Gastrocnemius medialis (tissue), 4 donors: ENCODE measurements at regions of chr2 and their contacts with region 1.

Region 1: GRCh38 chr2:102240640-102241370 is 54.0 kb downstream of the IL1RL2 start:
- DNase-seq: peak; percentile 86 to 87
- ATAC-seq: peak; percentile 96 to 98
- H3K4me3 ChIP-seq: peak overlapping the region in 1 of 4 donors; percentile 28
- H3K27ac ChIP-seq: peak overlapping the region; percentile 61 to 79 (median 70)
- H3K4me1 ChIP-seq: peaks cover 0 to 13% of the 10 kb centered on the region in 2 donors
- H3K27me3 ChIP-seq: no peaks in the 10 kb centered on the region
- CTCF ChIP-seq: peak; percentile 95 to 99 (median 97)
- POLR2A ChIP-seq: peak in 1 of 2 donors; percentile 25

Region 2: DNA sequence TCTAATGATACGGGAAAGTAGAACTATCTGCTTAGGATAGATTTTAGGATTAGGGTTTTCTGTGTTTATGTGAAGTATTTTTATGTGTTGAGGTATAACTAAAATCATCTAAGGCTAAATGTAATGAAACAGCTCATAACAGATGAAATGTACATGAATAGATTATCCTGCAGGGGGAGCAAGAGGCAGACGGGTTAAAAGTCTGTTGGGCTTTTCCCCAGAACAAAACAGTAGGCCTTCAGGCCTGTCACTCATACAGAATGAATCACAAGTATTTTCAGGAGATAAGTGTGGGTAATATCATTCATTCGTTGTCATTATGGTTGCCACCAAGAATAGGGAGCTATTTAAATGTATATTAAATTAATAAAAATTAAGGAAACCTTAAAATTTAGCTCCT is 356.9 kb before region 1 on chr2:
- in situ Hi-C with region 1: no loop called
- intact Hi-C with region 1: loop called (anchors 5 kb)
- DNase-seq: no peak
- ATAC-seq: peak; percentile 53 to 81
- H3K4me3 ChIP-seq: no peak overlapping the region
- H3K27ac ChIP-seq: no peak overlapping the region
- H3K4me1 ChIP-seq: peaks cover 0 to 16% of the 10 kb centered on the region in 2 donors
- H3K27me3 ChIP-seq: no peaks in the 10 kb centered on the region
- CTCF ChIP-seq: peak; percentile 33 to 47 (median 41)
- POLR2A ChIP-seq: no peak

Region 3: DNA sequence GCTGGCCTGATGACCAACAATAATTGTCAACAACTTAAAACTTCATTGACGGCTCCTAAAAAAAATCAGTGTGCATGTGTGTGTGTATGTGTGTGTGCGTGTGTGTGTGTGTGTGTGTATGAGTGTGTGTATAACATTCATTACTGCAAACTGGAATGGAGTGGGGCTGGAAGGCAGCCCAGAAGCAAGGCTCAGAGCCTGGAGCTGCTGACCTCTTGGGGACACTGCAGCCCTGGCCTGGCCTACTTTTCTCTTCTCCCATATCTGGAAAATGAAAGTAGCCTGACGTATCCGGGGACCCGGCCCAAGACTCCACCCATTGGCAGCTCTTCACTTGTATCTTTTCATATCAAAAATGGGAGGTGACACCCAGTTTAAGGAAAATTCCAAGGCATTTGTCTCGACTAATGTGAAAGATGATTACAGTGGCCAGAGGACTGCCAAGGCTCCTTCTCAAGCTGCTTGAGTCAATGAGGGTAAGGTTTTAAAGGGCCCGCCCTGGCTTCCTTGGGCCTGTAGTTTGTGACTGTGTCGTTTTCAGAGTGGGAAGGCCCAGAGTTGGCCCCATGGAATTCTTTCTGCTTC is 170.7 kb before region 1 on chr2:
- in situ Hi-C with region 1: no loop called
- intact Hi-C with region 1: loop called (anchors 2 kb)
- DNase-seq: peak; percentile 88 to 97
- ATAC-seq: peak; percentile 78 to 87
- H3K4me3 ChIP-seq: peak overlapping the region; percentile 46 to 55 (median 52)
- H3K27ac ChIP-seq: peak overlapping the region; percentile 87 to 95 (median 92)
- H3K4me1 ChIP-seq: peaks cover 44 to 49% of the 10 kb centered on the region in 2 donors
- H3K27me3 ChIP-seq: no peaks in the 10 kb centered on the region
- CTCF ChIP-seq: peak in 2 of 5 experiments; percentile 13 to 28
- POLR2A ChIP-seq: peak in 1 of 2 donors; percentile 44

Region 4: DNA sequence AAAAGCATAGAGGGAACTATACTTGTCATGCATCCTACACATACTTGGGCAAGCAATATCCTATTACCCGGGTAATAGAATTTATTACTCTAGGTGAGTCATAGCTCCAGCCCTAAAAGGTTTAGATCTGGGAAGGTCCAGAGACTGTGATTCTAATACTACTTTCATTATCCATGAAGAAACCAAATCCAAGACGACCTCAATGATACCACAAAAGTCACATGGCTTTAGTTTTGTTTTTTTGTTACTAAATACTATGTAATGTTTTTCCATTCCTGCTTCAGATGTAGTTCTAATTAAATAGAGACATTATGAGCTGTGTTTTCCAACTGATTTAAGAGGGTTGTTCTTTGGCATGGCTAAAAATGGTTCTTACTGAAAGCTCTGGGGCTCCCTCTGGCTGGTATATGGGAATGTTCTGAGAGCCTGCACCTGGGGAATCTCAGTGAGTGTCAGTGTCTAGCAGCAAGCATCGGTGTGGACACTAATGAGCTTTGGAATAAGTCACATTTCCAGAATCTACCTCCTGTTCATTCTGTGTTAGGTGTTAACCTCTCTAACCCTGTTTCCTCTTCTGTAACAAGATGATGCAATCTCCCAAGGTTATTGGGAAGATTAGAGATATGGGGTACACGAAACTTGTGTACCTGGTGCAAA is 74.5 kb before region 1 on chr2:
- in situ Hi-C with region 1: no loop called
- intact Hi-C with region 1: loop called (anchors 2 kb)
- DNase-seq: peak in 1 of 2 donors; percentile 49
- ATAC-seq: peak; percentile 94 to 95
- H3K4me3 ChIP-seq: no peak overlapping the region
- H3K27ac ChIP-seq: peak overlapping the region; percentile 4 to 47 (median 22)
- H3K4me1 ChIP-seq: peaks cover 9 to 15% of the 10 kb centered on the region in 2 donors
- H3K27me3 ChIP-seq: no peaks in the 10 kb centered on the region
- CTCF ChIP-seq: peak; percentile 67 to 73 (median 72)
- POLR2A ChIP-seq: no peak

Region 5: DNA sequence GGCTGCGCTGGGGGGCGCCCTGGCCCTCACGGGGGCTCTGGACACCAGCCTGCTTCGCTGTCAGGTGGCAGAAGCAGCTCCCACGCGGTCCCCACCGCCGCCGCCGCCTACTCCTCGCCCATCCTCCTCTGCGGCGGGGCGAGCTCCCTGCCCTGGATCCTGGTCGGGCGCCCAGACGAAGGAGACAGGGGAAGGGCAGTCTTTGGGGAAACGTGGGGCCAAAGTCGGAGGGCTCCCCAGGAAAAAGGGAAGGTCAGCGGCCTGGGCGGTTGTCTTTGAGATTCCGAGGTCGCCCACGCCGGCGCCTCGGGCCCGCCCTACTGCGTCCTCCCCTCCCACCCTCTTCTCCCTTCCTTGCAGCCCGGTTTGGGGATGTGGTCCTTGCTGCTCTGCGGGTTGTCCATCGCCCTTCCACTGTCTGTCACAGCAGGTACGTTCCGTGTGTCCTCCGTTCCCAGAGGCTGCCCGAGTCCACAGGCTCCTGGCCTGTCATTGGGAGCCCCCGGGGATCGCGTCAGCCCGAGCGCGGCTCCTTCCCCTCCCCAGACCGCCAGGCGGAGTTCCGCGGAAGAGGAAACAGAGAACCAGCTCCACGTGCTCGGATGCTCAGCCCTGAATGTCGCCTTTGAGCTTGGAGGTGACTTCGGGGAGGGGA is 53.2 kb before region 1 on chr2:
- in situ Hi-C with region 1: loop called in 1 of 4 experiments (anchors 10 kb)
- intact Hi-C with region 1: loop called (anchors 1 kb)
- DNase-seq: peak; percentile 31 to 41
- ATAC-seq: peak; percentile 72 to 75
- H3K4me3 ChIP-seq: peak overlapping the region; percentile 56 to 66 (median 61)
- H3K27ac ChIP-seq: peak overlapping the region; percentile 50 to 74 (median 60)
- H3K4me1 ChIP-seq: no peaks in the 10 kb centered on the region
- H3K27me3 ChIP-seq: no peaks in the 10 kb centered on the region
- CTCF ChIP-seq: peak in 4 of 5 experiments; percentile 27 to 54 (median 50)
- POLR2A ChIP-seq: peak in 1 of 2 donors; percentile 28